ENCODE measurements at regions of chr7 and their contacts with region 1.

Region 1: DNA sequence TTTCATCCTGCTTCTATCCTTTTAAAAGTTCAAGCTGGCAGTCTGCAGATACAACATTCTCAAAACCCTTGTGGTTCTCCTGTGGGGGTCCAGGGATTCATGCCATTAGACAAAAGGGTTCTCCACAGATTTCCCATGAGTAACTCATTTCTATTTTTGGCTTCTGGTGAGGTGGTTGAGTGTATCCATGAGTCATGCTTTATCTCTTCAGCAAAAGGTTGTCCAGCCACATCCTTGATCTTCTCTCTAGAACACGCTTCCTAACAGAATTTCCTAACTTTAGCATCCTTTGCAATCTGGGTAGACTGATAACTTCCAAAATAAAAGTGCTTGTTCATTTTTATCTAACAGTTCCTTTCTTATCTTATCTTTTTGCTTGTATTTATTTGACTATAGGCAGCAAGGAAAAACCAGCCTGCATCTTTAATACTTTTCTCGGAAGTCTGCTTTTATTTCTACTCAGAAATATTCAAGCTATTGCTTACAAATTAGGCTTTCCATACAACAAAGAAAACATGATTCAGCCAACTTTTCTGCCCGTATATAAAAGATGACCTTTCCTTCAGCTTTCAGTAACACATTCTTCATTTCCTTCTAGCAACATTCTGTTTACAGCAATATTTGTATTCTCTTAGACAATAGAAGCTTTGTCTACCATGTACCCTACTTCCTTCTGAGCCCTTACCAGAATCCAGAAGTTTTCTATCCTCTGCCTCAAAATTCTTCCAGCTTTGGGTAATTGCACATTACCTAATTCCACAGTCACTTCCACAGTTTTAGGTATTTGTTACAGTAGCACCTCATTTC is 79.3 kb upstream of the IL6 start:
- DNase-seq: peak; percentile 75
- H3K4me3 ChIP-seq: no peak overlapping the region
- H3K27ac ChIP-seq: no peak overlapping the region
- H3K4me1 ChIP-seq: peaks cover 17% of the 10 kb centered on the region
- H3K27me3 ChIP-seq: no peaks in the 10 kb centered on the region
- CTCF ChIP-seq: no peak

Region 2: DNA sequence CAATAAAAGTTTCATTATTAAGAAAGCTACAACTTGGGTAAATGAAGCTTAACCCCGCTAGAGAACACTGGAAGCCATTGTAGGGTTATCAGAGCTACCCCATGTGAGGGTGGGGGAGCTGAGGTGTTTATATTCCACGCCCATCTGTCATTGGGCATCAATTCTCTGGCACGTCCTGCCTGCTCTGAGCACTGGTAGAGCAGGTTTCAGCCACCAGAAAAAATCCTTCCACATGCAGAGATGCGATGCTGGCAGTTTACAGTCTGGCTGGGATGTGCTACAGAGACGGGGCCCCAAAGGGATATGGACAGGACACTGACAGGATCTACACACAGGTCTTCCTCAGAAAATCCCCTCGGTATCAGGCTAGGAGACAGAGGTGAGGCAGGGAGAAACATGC is 274.8 kb before region 1 on chr7:
- CTCF ChIA-PET with region 1: no interaction called
- dilution Hi-C with region 1: no loop called
- in situ Hi-C with region 1: no loop called
- intact Hi-C with region 1: no loop called
- DNase-seq: no peak
- H3K4me3 ChIP-seq: no peak overlapping the region
- H3K27ac ChIP-seq: no peak overlapping the region
- H3K4me1 ChIP-seq: no peaks in the 10 kb centered on the region
- H3K27me3 ChIP-seq: no peaks in the 10 kb centered on the region
- CTCF ChIP-seq: no peak

Region 3: GRCh38 chr7:22601812-22602565 is 45.7 kb before region 1 on chr7:
- CTCF ChIA-PET with region 1: no interaction called
- dilution Hi-C with region 1: loop called (anchors 5 kb)
- in situ Hi-C with region 1: no loop called
- intact Hi-C with region 1: no loop called
- DNase-seq: peak; percentile 27
- H3K4me3 ChIP-seq: no peak overlapping the region
- H3K27ac ChIP-seq: no peak overlapping the region
- H3K4me1 ChIP-seq: peaks cover 14% of the 10 kb centered on the region
- H3K27me3 ChIP-seq: no peaks in the 10 kb centered on the region
- CTCF ChIP-seq: no peak